ENCODE measurements at regions of chr20 and their contacts with region 1.

Region 1: DNA sequence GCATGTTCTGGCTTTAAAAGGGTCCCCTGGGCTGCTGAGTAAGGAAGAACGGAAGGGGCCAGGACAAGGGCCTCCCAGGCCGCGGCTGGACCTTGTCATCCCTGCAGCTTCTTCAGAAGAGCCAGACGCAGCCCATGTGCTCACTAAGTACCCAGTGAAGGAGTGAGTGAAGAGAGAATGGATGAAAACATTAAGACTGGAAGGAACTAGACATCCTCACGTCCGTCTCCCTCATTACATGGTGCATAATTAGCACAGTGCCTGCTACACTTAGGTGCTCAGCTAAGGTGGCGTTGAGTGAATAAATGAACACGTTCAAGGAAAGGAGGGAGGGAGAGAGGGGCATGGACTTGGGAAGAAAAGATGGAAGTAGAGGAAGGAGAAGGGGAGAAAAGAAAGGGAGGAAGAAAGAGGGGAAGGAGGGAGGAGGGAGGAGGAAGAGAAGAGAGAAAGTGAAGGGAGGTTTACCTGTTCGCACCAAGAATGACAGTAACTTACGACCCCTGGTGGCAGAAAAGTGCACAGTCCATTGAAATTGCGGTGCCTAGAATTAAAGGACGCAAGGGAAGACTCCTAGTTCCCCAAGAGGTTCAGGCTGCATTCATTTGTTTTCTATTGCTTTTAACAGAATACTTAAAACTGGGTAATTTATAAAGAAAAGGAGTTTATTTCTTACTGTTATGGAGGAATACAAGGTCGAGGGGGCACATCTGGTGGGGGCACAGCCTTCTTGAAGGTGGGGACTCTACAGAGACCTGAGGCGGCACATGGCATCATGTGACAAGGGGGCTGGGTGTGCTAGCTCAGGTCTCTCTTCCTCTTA is 8.0 kb downstream of the TP53RK start:
- DNase-seq: peak in 1 of 2 donors; percentile 52
- ATAC-seq: no peak
- H3K4me3 ChIP-seq: no peak overlapping the region
- H3K27ac ChIP-seq: no peak overlapping the region
- H3K4me1 ChIP-seq: no peaks in the 10 kb centered on the region
- H3K27me3 ChIP-seq: no peaks in the 10 kb centered on the region

Region 2: DNA sequence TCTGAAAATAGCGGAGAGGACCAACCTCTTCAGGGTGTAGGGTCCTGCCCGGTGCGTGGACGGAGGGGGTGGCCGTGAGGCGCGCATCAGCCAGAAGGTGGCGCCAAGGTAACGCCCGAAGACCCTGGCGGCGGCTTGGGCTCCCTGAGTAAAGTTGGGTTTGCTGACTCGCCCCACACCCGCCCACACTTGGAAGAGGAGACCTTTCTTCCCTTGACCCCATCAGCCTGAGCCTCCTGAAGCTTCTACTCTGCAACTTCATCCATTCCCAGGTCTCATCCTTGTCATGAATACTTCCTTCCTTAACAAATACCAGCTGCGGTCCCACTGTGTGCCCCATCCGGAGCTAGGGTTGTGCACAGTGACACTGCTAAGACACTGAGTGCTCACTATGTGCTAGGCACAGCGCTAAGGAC is 548.5 kb before region 1 on chr20:
- intact Hi-C with region 1: loop called in 1 of 2 experiments (anchors 5 kb)
- DNase-seq: peak; percentile 73 to 89
- ATAC-seq: peak; percentile 83
- H3K4me3 ChIP-seq: no peak overlapping the region
- H3K27ac ChIP-seq: no peak overlapping the region
- H3K4me1 ChIP-seq: no peaks in the 10 kb centered on the region
- H3K27me3 ChIP-seq: no peaks in the 10 kb centered on the region

Region 3: DNA sequence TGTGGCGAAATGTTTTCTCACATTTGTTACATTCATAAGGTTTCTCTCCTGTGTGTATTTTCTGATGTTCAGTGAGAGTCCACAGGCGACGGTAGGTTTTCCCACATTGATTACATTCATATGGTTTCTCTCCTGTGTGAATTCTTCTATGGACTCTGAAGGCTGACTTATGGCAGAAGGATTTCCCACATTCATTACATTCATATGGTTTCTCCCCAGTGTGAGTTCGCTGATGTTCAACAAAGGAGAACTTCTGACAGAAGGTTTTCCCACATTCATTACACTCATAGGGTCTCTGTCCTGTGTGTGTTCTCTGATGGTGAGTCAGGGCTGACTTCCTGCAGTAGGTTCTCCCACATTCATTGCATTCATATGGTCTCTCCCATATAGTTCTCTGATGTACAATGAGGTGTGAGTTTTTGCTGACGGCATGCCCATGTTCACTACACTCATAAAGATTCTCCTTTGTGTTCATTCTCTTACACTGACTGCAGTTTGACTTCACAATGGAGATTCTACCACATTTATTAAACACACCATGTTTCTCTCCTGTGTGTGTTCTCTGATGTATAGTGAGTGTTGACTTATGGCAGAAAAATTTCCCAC is 179.8 kb before region 1 on chr20:
- intact Hi-C with region 1: no loop called
- DNase-seq: no peak
- ATAC-seq: no peak
- H3K4me3 ChIP-seq: no peak overlapping the region
- H3K27ac ChIP-seq: no peak overlapping the region
- H3K4me1 ChIP-seq: no peaks in the 10 kb centered on the region
- H3K27me3 ChIP-seq: peaks cover 0 to 2% of the 10 kb centered on the region in 2 donors

Region 4: DNA sequence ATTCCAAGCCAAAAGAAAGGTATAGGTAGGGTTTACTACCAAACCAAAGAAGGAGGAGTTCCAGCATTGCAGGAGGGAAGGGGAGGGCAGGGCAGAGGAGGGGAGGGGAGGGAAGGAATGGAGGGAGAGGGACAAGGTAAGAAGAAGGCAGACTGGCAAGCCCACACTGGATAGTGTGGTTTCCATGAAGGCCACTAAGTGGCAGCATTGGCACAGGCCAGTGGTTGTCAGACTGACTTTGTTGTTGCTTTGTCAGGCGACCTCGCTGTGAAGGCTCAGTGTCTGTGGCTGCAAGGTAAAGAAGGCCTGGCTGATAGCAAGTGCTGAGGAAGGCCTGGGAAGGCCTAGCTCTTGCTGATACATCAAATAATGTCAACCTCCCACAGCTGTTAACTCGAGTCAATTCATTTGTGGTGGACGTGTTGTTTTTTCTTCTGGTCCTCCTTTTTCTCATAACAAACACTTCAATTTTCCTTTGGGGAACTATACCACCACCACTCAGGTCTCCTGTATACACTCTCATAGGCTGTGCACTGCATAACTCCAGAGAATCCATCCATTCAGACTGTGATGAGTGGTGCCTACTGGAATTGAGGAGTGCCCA is 160.2 kb before region 1 on chr20:
- intact Hi-C with region 1: loop called (anchors 5 kb)
- DNase-seq: peak in 1 of 2 donors; percentile 53
- ATAC-seq: no peak
- H3K4me3 ChIP-seq: no peak overlapping the region
- H3K27ac ChIP-seq: no peak overlapping the region
- H3K4me1 ChIP-seq: no peaks in the 10 kb centered on the region
- H3K27me3 ChIP-seq: peaks cover 0 to 2% of the 10 kb centered on the region in 2 donors

Region 5: DNA sequence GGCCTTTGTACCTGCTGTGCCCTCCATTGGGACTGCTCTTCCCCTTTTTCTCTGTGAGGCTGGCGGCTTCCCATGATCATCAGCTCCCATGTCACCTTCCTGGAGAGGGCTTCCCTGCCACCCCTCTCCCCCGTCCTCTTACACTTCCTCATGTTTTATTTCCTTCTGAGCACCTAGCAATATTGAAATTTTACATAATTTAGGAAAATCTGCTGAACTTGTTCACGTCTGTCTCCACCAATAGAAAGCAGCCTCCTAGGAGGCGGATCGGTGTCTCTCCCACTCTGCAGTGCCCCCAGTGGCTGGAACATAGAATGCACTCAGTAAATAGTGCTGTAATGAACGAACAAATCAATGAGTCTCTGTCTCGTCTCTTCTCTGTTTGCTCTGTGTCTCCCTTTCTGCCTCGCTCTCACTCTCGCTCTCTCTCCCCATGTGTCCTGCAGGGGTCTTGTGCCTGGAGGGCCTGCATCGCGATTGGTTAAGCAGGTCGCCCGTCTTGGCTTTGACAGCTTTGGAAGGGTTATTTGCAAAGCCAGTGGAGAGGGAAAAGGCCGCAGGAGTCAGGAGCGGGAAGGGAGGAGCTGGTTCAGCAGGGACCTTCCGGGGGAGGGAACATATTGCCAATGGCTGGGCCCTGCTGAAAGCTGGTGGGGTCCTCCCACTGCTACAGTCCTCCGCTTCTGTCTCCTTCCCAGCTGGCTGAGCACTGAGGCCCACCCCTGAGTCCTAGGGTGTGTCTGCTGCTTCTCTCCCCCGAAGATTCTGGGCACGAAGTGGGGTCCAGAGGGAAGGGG is 118.7 kb before region 1 on chr20:
- intact Hi-C with region 1: loop called (anchors 5 kb)
- DNase-seq: peak in 1 of 2 donors; percentile 71
- ATAC-seq: peak; percentile 89
- H3K4me3 ChIP-seq: peak overlapping the region in 1 of 2 donors; percentile 7
- H3K27ac ChIP-seq: peak overlapping the region in 1 of 2 donors; percentile 22
- H3K4me1 ChIP-seq: no peaks in the 10 kb centered on the region
- H3K27me3 ChIP-seq: no peaks in the 10 kb centered on the region

Measured in aorta (tissue), 5 donors.